ENCODE measurements at regions of chr9 and their contacts with region 1.

Region 1: GRCh38 chr9:118091711-118092500 is 387.7 kb downstream of the TLR4 start:
- DNase-seq: no peak
- H3K4me3 ChIP-seq: peak overlapping the region; percentile 1 to 64 (median 37)
- H3K27ac ChIP-seq: peak overlapping the region; percentile 45 to 98 (median 92)
- H3K27me3 ChIP-seq: no peaks in the 10 kb centered on the region
- CTCF ChIP-seq: peak in 4 of 56 donors; percentile 1 to 17 (median 8)

Region 2: DNA sequence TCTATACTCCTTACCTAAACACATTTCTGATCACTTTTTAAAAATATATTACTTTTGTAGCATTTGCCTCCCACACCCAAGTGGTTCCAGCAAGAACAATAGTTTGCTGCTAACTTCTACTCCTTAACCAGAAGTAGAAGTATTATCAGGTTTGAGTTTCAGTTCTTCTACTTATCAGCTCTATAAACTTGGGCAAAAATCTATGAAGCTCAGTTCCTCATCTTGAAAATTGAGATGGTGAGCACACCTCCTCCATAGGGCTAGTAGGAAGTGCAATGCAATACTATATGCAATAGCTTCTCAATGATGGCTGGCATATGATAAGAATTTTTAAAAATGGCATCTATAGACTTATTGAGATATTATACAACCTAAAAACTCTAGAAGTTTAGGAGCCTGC is 104.0 kb before region 1 on chr9:
- intact Hi-C with region 1: loop called in 1 of 2 experiments (anchors 10 kb)
- DNase-seq: no peak
- H3K4me3 ChIP-seq: no peak overlapping the region
- H3K27ac ChIP-seq: no peak overlapping the region
- H3K27me3 ChIP-seq: no peaks in the 10 kb centered on the region
- CTCF ChIP-seq: no peak

Region 3: GRCh38 chr9:118236625-118237024 is 144.7 kb after region 1 on chr9:
- intact Hi-C with region 1: no loop called
- DNase-seq: no peak
- H3K4me3 ChIP-seq: no peak overlapping the region
- H3K27ac ChIP-seq: no peak overlapping the region
- H3K27me3 ChIP-seq: no peaks in the 10 kb centered on the region
- CTCF ChIP-seq: no peak

Region 4: DNA sequence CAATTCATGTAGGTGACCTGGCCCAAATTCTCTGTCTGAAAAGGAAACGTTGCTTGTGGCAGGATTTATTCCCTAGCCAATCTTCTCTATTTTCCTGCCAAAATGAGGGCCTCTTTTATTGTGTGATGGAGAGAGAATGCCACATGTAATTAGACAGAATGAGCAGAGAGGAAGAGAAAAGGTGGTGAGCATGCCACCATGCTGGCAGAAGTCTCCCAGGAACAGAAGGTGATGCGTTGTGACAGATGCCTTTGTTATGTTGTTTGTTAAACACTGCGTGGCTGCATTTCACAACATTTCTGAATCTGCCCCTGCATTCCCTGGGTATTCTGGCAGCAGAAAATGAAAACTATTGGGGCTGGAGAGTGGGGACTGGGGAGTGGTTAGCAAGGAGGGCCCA is 189.9 kb after region 1 on chr9:
- intact Hi-C with region 1: no loop called
- DNase-seq: peak in 1 of 10 donors; percentile 83
- H3K4me3 ChIP-seq: no peak overlapping the region
- H3K27ac ChIP-seq: peak overlapping the region in 1 of 59 donors; percentile 78
- H3K27me3 ChIP-seq: peaks cover 0 to 5% (median 0%) of the 10 kb centered on the region in 45 donors
- CTCF ChIP-seq: no peak